B cell (primary cell): ENCODE measurements at regions of chr5 and their contacts with region 1.

Region 1: DNA sequence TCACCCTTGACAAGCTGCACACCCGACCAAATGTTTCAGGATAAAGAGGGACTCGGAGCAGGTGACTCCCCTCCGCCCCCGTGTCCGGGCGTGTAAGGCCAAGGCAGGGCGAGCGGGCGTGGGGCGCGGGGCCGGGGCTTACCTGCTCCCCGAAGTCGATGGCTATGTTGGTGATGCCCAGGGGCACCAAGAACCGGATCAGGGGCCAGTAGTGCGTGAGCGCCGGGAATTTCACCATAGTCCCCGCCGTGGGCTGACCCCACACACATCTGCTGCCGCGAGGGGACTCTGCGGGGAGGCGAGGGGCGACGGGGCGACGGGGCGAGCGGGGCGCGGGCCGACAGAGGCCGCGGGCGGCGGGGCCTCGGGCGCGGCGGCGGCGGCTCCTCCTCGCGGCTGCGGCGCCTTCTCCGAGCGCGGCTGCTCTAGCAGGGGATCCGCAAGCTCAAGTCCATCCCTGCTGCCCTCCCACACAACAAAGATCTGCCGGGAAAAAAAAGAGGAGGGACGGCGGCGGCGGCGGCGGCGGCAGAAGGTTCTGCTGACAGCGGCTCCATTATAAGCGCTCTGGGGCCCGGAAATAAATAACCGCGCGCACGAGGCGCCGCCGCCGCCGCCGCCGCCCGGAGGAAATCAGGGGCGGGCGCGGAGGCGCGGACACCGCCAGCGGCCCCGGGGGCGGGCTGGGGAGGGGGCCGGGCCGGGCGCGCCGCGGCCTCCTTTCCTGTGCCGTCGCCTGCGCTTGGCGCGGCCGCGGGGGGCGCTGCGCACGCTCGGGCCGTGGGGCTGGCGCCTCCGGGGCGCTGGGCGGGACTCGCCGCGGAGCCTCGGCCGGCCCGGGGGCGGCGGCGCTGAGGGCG is at the start of gene ANKH:
- DNase-seq: peak; percentile 90
- ATAC-seq: peak; percentile 87
- H3K4me3 ChIP-seq: peak within 1 kb of the TSS; percentile 7 to 86 (median 64)
- H3K4me3 Mint-ChIP-seq: peak within 1 kb of the TSS; percentile 94
- H3K27ac ChIP-seq: peak within 1 kb of the TSS; percentile 24 to 74
- H3K27ac Mint-ChIP-seq: peak within 1 kb of the TSS; percentile 88
- H3K4me1 ChIP-seq: peaks cover 13 to 22% of the 10 kb centered on the region in 2 donors
- H3K4me1 Mint-ChIP-seq: peaks cover 25% of the 10 kb centered on the region
- H3K27me3 ChIP-seq: peaks cover 0 to 3% (median 0%) of the 10 kb centered on the region in 4 experiments
- H3K27me3 Mint-ChIP-seq: peaks cover 9% of the 10 kb centered on the region
- CTCF ChIP-seq: no peak
- total RNA-seq, gene ANKH: 71.1 and 71.3 TPM in 2 replicates

Region 2: DNA sequence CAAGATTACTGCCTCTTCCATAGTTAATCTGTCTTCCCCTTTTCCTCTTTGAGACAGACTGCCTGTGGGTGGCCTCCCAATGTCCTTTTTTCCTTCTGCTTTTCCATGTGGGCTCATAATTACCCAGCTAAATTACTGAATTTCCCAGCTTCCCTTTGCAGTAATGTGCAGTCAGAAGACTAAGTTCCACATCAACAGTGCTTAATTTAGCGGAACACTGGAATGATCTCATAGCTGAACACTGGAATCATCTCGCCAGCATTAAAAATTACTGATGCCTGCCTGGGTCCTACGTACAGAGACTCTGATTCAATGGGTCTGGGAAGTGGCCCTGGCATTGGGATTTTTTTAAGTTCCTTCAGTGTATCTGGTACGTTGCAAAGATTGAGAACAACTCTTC is 1011.3 kb before region 1 on chr5:
- CTCF ChIA-PET with region 1: no interaction called
- POLR2A ChIA-PET with region 1: no interaction called
- intact Hi-C with region 1: no loop called
- DNase-seq: no peak
- ATAC-seq: no peak
- H3K4me3 ChIP-seq: no peak overlapping the region
- H3K4me3 Mint-ChIP-seq: no peak overlapping the region
- H3K27ac ChIP-seq: no peak overlapping the region
- H3K27ac Mint-ChIP-seq: no peak overlapping the region
- H3K4me1 ChIP-seq: no peaks in the 10 kb centered on the region
- H3K4me1 Mint-ChIP-seq: no peaks in the 10 kb centered on the region
- H3K27me3 ChIP-seq: no peaks in the 10 kb centered on the region
- H3K27me3 Mint-ChIP-seq: no peaks in the 10 kb centered on the region
- CTCF ChIP-seq: no peak

Region 3: GRCh38 chr5:14342306-14342705 is 529.1 kb before region 1 on chr5:
- CTCF ChIA-PET with region 1: no interaction called
- POLR2A ChIA-PET with region 1: no interaction called
- intact Hi-C with region 1: loop called (anchors 5 kb)
- DNase-seq: peak; percentile 62
- ATAC-seq: peak; percentile 95
- H3K4me3 ChIP-seq: peak overlapping the region in 3 of 5 experiments; percentile 2 to 31 (median 3)
- H3K4me3 Mint-ChIP-seq: peak overlapping the region; percentile 70
- H3K27ac ChIP-seq: peak overlapping the region; percentile 45 to 59
- H3K27ac Mint-ChIP-seq: peak overlapping the region; percentile 82
- H3K4me1 ChIP-seq: peaks cover 33 to 38% of the 10 kb centered on the region in 2 donors
- H3K4me1 Mint-ChIP-seq: peaks cover 46% of the 10 kb centered on the region
- H3K27me3 ChIP-seq: no peaks in the 10 kb centered on the region
- H3K27me3 Mint-ChIP-seq: no peaks in the 10 kb centered on the region
- CTCF ChIP-seq: no peak

Region 4: DNA sequence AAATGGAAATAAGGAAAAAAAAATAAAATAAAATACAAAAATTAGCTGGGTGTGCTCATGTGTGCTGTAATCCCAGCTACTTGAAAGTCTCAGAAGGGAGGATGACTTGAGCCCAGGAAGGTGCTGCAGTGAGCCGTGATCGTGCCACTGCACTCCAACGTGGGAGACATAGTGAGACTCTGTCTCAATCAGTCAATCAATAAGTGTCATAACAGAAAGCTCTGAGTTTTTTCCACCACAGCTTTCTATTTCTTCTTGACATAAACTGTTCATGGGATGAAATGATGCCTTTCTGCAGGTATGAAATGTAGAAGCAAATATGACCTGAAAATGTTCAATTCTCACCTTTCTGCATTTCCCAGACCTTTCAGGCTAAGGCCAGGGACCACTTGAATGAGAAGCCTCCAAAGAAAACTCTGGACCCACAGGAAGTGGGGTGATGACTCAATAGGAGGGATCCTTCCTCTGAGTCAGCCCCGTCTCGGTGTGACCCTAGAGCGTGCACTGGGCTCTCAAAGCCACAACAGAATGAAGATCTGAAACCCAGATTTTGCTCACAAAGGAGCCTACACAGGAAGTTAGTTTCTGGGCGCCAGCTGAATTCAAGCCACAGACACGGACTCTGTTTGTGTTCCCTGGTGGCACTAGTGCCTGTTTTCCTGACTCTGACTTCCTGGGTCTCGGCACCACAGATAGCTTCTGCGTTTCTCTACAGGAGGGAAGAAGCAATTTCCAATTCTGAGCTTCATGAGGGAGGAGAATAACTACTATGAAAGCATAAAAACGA is 61.9 kb before region 1 on chr5:
- CTCF ChIA-PET with region 1: interaction called, 17 read pairs
- POLR2A ChIA-PET with region 1: interaction called, 9 read pairs
- intact Hi-C with region 1: loop called (anchors 1 kb)
- DNase-seq: peak; percentile 75
- ATAC-seq: peak; percentile 93
- H3K4me3 ChIP-seq: peak overlapping the region in 3 of 5 experiments; percentile 22 to 51 (median 43)
- H3K4me3 Mint-ChIP-seq: peak overlapping the region; percentile 89
- H3K27ac ChIP-seq: peak overlapping the region; percentile 26 to 75
- H3K27ac Mint-ChIP-seq: peak overlapping the region; percentile 94
- H3K4me1 ChIP-seq: peaks cover 31 to 38% of the 10 kb centered on the region in 2 donors
- H3K4me1 Mint-ChIP-seq: peaks cover 43% of the 10 kb centered on the region
- H3K27me3 ChIP-seq: no peaks in the 10 kb centered on the region
- H3K27me3 Mint-ChIP-seq: no peaks in the 10 kb centered on the region
- CTCF ChIP-seq: no peak